Activated CD8-positive, alpha-beta T cell treated with anti-CD3 and anti-CD28 coated beads, Interleukin-2, amount 10 ng/mL, durations not matched to agents 7 days and 5 days (primary cell): ENCODE measurements at regions of chr16 and their contacts with region 1.

Region 1: GRCh38 chr16:29790183-29790952 is at the start of gene KIF22:
- DNase-seq: peak; percentile 100
- ATAC-seq: peak; percentile 97
- H3K4me3 Mint-ChIP-seq: peak within 1 kb of the TSS; percentile 100
- H3K27ac Mint-ChIP-seq: peak within 1 kb of the TSS; percentile 96
- H3K4me1 Mint-ChIP-seq: peaks cover 44% of the 10 kb centered on the region
- H3K27me3 Mint-ChIP-seq: no peaks in the 10 kb centered on the region
- total RNA-seq, gene KIF22: 229 to 233 TPM

Region 2: GRCh38 chr16:29738514-29738913 is 51.9 kb before region 1 on chr16:
- CTCF ChIA-PET with region 1: interaction called, 24 read pairs
- POLR2A ChIA-PET with region 1: interaction called, 9 read pairs
- DNase-seq: peak; percentile 66
- ATAC-seq: peak; percentile 83
- H3K4me3 Mint-ChIP-seq: peak overlapping the region; percentile 40
- H3K27ac Mint-ChIP-seq: peak overlapping the region; percentile 77
- H3K4me1 Mint-ChIP-seq: peaks cover 60% of the 10 kb centered on the region
- H3K27me3 Mint-ChIP-seq: peaks cover 3% of the 10 kb centered on the region

Region 3: DNA sequence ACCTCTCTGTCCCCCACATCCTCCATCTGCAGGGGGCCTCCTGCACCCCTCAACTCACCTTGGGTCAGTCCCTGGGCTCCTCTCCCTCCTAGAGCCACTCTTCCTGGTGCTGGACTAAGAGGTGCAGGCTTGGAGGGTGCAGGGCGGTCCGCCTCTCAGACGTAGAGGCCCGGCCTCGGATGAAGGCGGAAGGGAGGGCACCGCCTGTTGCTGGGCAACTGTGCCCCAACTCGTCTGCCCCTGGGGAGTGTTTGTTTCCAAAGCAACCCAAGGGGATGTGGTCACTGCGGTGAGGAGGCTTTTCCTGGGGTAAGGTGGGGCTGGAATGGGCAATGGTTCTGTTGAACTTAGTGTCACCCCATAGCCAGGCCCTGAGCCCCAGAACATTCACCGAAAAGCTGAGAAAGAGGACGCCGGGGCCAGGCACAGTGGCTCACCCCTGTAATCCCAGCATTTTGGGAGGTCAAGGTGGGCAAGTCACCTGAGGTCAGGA is 44.5 kb before region 1 on chr16 and contains the start of gene C16orf54:
- CTCF ChIA-PET with region 1: interaction called, 16 read pairs
- POLR2A ChIA-PET with region 1: interaction called, 27 read pairs
- DNase-seq: peak; percentile 97
- ATAC-seq: peak; percentile 84
- H3K4me3 Mint-ChIP-seq: peak within 1 kb of the TSS; percentile 99
- H3K27ac Mint-ChIP-seq: peak within 1 kb of the TSS; percentile 96
- H3K4me1 Mint-ChIP-seq: peaks cover 60% of the 10 kb centered on the region
- H3K27me3 Mint-ChIP-seq: no peaks in the 10 kb centered on the region
- total RNA-seq, gene C16orf54: 64.3 to 68.0 TPM

Region 4: DNA sequence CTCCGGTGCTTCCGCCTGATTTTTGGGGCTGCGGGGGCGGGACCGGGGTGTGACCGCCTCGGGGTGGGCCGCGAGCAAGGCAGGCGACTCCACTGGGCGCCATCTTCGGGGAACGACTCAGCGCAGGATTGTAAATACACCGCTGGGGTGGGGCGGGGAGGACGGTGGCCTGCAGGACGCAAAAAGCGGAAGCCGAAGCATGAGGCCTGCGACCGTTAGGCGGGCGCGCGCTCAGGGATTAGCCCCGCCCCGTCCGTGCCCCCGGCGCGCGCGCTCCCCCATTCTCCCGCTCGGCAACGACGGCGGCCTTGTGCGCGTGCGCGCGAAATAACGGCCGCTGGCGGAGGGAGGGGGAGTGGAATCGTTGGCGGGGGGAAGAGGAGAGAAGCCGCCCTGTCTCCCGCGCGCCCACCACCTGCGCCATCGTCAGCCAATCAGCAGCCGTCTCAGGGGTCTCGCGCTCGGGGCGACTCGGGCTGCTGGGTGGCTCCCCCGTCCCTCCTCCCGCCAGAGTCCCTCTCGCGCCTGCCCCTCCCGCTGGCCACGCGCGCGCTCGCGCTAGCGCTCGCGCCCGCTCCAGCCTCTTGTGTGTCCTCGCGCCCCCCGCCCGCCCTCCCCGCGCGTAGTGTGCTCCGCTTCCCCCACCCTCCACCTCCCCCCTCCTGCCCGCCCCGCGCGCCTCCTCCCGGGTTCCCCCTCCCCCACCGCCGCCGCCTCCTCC is 15.2 kb after region 1 on chr16:
- CTCF ChIA-PET with region 1: interaction called, 36 read pairs
- POLR2A ChIA-PET with region 1: interaction called, 89 read pairs
- DNase-seq: peak; percentile 99
- ATAC-seq: peak; percentile 72
- H3K4me3 Mint-ChIP-seq: peak overlapping the region; percentile 89
- H3K27ac Mint-ChIP-seq: peak overlapping the region; percentile 93
- H3K4me1 Mint-ChIP-seq: peaks cover 49% of the 10 kb centered on the region
- H3K27me3 Mint-ChIP-seq: no peaks in the 10 kb centered on the region

Region 5: GRCh38 chr16:29815793-29816693 is 25.7 kb after region 1 on chr16 and contains the start of gene PAGR1:
- CTCF ChIA-PET with region 1: interaction called, 37 read pairs
- POLR2A ChIA-PET with region 1: interaction called, 12 read pairs
- DNase-seq: peak; percentile 99
- ATAC-seq: peak; percentile 76
- H3K4me3 Mint-ChIP-seq: peak within 1 kb of the TSS; percentile 98
- H3K27ac Mint-ChIP-seq: peak within 1 kb of the TSS; percentile 92
- H3K4me1 Mint-ChIP-seq: peaks cover 70% of the 10 kb centered on the region
- H3K27me3 Mint-ChIP-seq: peaks cover 8% of the 10 kb centered on the region
- total RNA-seq, gene PAGR1: 39.1 TPM

Region 6: DNA sequence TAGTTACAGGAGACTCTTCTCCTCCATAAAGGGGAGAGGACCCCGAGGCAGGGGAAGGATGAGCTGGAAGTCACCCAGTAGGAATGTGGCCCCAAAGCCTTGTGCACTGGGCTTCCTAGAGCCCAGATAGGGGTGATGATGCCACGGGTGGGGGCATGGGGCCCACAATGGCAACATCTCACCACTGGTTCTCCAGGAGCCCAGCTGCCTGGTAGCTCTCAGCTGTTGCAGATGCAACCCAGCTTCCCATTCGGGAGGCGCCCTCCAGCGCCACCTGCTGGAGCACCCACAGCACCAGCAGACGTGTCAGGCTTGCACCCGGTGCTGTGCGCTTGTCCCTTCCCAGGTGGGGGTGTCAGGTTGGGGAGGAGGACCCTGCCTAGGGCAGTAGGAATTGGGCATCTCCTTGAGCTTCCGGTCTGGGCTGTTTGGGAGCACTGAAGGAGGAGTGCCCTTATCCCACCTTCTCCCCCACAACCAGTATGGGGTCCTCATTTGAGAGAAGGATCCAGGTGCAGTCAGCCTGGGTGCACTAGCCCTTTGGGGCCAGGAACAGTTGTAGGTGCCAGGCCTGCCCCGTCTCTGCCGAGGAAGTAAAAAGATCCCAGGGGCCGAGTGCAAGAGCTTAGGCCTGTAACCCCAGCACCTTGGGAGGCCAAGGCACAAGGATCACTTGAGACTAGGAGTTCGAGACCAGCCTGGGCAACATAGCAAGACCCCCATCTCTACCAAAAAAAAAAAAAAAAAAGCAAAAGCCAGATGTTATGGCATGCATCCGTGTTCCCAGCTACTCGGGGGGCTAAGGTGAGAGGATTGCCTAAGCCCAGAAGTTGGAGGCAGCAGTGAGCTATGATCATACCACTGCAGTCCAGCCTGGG is 58.3 kb after region 1 on chr16:
- CTCF ChIA-PET with region 1: interaction called, 12 read pairs
- POLR2A ChIA-PET with region 1: no interaction called
- DNase-seq: peak; percentile 87
- ATAC-seq: peak; percentile 95
- H3K4me3 Mint-ChIP-seq: no peak overlapping the region
- H3K27ac Mint-ChIP-seq: no peak overlapping the region
- H3K4me1 Mint-ChIP-seq: peaks cover 6% of the 10 kb centered on the region
- H3K27me3 Mint-ChIP-seq: no peaks in the 10 kb centered on the region

Region 7: DNA sequence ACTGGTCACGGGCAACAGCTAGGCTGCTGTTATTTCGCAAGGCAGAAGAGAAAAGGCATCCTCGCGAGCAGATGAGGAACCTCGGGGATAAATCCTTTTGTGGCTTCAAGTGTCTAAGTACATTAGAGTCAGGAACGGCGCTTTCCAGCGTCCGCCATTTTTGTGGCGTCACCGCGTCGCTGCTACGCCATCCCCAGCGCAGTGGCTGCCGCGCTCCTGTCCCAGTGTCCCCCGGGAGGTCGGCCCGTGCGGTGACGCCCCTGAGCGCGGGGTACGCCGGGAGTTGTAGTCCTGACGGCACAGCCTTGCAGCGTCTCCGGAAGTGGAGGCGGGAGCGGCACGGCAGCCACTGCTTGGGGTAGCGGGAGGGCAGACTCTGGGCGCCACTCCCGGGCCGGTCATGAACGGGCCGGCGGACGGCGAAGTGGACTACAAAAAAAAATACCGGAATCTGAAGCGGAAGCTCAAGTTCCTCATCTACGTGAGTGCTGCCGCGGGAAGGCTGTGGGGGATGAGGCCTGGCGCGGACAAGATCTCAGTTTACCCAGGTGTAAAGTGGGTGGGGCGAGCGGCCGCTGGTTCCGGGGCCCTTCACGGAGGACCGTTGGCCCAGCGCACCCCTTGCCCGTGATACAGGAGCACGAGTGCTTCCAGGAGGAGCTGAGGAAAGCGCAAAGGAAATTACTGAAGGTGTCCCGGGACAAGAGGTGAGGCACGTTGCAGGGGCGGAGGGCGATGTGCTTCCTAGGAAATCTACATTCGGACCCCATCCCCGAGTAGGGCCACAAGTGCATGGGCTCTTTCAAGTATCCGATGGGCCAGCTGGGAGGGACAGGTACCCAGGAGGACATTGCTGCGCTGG is 205.8 kb after region 1 on chr16 and contains the start of gene INO80E:
- CTCF ChIA-PET with region 1: interaction called, 4 read pairs
- POLR2A ChIA-PET with region 1: interaction called, 13 read pairs
- DNase-seq: peak; percentile 100
- ATAC-seq: peak; percentile 94
- H3K4me3 Mint-ChIP-seq: peak within 1 kb of the TSS; percentile 99
- H3K27ac Mint-ChIP-seq: peak within 1 kb of the TSS; percentile 96
- H3K4me1 Mint-ChIP-seq: peaks cover 33% of the 10 kb centered on the region
- H3K27me3 Mint-ChIP-seq: no peaks in the 10 kb centered on the region
- total RNA-seq, gene INO80E: 104 to 117 TPM

Region 8: DNA sequence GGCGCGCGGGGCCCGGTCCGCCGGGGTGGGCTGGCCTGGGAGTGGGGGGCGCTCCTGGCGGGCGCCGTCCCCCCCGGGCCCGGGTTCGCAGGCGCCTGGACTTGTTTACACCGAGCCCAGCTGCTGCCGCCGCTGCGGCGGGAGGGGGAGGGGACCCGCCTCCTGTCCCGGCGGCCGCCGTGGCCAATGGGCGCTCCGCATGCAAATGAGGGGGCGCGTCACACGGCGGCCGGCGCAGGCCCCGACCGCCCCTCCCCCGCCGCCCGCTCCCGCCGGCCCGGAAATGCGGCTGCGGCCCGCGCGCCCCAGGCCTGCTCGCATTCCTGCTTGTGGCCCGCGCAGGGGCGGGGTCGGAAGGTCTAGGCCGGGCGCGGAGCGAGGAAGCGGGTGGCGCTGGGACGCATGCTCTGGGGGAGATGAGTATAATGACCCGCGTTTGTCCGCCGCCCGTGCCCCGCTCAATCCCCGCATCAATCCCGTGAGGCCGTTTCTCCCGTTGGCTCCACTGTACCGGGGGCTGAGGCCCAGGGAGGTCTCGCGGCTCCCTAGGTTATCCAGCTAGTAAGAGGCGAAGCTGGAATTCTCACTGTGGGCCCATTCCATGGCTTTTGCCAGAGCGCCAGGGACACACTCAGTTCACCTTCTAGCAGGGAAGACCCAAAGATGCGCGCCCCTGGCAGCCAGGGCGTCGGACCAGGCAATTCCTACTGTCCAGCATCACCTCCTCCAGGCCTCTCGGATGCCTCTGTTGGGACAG is 305.9 kb after region 1 on chr16 and contains the start of gene YPEL3:
- CTCF ChIA-PET with region 1: no interaction called
- POLR2A ChIA-PET with region 1: no interaction called
- DNase-seq: peak; percentile 93
- ATAC-seq: peak; percentile 63
- H3K4me3 Mint-ChIP-seq: peak within 1 kb of the TSS; percentile 85
- H3K27ac Mint-ChIP-seq: peak within 1 kb of the TSS; percentile 89
- H3K4me1 Mint-ChIP-seq: peaks cover 55% of the 10 kb centered on the region
- H3K27me3 Mint-ChIP-seq: no peaks in the 10 kb centered on the region
- total RNA-seq, gene YPEL3: 29.4 to 34.5 TPM